Sigmoid colon (tissue), 7 donors: ENCODE measurements at regions of chr3 and their contacts with region 1.

Region 1: DNA sequence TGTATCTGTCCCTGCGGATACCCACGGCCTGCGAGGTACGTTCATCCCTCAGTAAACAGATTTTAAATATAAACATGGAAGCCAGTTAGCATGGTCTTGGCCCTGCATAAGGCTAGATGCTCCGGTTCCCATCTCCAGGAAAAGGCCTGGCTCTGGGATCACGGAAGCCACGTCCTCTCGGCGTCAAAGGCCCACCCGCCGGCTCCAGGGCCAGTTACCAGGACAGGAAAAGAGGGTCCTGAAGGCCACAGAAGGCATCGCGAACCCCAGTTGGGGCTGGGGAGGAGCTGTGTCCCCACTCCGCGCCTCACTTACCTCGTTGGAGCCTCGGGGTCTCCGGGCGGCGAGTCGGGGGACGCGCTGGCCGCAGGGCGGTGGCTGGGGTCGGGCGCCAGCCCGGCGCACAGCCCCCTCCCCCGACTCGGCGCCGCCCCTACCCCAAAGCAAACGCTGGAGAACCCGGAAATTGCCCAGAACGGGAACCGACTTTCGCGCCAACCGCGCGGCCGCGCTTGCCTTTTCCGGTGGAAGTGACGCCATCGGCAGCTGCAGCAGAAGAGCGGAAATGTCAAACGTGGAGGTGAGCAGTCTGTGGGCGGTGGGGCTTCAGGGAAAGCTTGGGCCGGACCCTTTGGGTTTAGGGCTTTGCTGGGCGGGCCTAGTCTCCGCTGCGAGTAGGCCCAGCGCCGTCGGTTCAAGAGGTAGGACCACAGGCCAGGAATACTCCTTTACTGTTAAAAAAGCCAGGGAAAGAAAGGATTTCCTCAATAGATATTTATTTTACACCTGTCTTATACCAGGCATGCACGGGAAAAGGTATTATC is at the start of gene TOPBP1:
- DNase-seq: peak; percentile 86
- H3K4me3 ChIP-seq: peak within 1 kb of the TSS; percentile 63 to 93 (median 85)
- H3K27ac ChIP-seq: peak within 1 kb of the TSS; percentile 82 to 86 (median 82)
- H3K4me1 ChIP-seq: peaks cover 0 to 28% (median 12%) of the 10 kb centered on the region in 4 donors
- H3K27me3 ChIP-seq: no peaks in the 10 kb centered on the region
- CTCF ChIP-seq: no peak
- EP300 ChIP-seq: no peak
- POLR2A ChIP-seq: no peak
- total RNA-seq, gene TOPBP1: 14.1 to 30.2 (median 16.8) TPM

Region 2: DNA sequence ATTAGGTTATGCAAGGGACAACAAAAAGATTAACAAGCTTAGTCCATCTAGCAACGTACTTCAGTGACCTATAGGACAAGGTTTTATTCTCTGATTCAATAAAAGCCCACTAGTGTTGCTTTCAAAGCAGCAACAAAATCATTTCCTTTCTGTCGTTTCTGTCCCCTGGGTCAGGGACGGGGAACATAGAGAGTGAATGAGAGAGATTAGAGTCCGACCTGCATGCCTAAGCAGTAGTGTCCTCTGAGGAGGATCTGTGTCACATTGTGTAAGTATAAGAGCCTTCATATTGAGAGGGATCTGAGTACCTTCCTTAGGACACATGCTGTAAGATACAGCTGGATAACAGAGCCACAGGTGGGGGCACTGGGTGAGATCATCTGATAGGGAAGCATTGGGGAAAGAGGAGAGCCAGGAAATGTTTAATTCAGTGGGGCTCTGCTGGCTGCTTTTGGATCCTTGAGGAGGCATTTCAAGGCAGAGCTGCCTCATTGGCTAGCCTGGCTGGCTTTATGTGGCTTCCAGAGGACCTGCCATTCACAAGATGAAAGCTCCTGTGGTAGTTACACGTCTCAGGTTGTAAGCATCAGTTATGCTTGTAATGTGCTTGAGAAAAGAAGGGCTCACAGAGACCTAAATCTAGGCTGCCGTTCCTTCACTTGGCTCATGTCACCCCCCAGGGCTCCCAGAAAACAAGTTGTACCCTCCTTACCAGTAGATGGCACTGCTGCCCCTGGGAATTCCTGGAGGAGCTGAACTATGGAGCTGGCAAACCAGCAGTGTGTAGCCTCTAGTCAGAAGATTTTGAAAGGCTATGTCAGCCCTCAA is 620.8 kb before region 1 on chr3:
- intact Hi-C with region 1: loop called (anchors 10 kb)
- DNase-seq: peak; percentile 75
- H3K4me3 ChIP-seq: no peak overlapping the region
- H3K27ac ChIP-seq: peak overlapping the region in 1 of 4 donors; percentile 66
- H3K4me1 ChIP-seq: peaks cover 0 to 22% (median 20%) of the 10 kb centered on the region in 4 donors
- H3K27me3 ChIP-seq: peaks cover 0 to 29% (median 12%) of the 10 kb centered on the region in 3 donors
- CTCF ChIP-seq: peak; percentile 32 to 60 (median 48)
- EP300 ChIP-seq: no peak
- POLR2A ChIP-seq: no peak

Region 3: DNA sequence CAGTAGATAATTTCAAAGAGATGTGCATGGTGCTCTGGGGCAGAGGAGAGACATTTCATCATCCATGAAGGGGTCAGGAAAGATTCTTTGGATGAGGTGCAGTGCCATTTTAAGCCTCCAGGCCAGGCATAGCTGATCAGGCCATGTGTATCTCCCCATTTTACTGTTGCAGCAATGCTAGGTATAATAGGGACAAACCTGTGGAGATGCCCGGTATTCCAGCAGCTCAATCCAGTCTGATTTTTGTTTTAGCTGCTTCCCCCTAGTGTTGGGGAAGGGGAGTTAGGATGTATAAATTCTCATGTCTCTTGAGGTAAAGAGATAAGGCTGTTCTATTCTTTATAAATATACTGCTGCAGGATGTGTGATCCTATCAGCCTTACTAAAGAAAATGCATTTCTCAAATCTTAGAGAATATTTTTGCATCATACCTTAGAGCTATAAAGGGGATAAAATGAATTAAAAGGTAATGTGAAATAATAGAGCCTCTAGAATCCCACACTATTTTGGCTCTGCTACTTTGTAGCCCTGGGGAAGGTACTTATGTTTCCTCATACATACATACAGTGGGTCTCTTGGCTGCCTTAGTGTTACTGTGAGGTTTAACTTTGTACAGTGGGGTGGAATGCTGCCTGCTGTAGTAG is 83.0 kb before region 1 on chr3:
- intact Hi-C with region 1: loop called (anchors 5 kb)
- DNase-seq: no peak
- H3K4me3 ChIP-seq: no peak overlapping the region
- H3K27ac ChIP-seq: no peak overlapping the region
- H3K4me1 ChIP-seq: peaks cover 0 to 69% (median 52%) of the 10 kb centered on the region in 4 donors
- H3K27me3 ChIP-seq: no peaks in the 10 kb centered on the region
- CTCF ChIP-seq: peak in 3 of 4 experiments; percentile 35 to 42 (median 38)
- EP300 ChIP-seq: no peak
- POLR2A ChIP-seq: no peak

Region 4: DNA sequence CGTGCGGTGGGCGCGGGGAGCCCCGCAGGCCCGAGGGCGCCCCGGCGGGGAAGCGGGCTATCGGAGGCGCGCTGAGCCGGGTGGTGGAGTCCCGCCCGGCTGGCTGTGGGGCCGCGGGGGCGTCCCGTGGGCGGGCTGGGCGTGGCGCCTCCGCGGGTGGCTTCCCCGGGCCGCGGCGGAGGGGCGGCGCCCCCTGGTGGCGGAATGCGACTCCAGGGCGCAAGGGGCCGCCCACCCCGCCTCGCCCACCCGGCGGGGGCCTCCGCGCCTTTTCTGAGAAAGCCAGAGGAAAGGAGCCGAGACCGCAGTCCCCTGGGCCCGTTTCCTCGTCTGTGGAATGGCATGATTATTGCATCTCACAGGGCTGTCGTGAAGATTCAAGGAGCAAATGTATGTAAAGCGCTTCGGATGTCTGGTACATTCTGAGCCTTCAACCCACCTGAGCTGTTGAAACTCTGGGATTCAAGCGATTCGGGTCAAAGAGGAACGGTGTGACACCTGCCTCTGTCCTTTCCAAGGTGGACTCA is 265.9 kb after region 1 on chr3:
- intact Hi-C with region 1: loop called (anchors 5 kb)
- DNase-seq: no peak
- H3K4me3 ChIP-seq: peak overlapping the region; percentile 29 to 60 (median 54)
- H3K27ac ChIP-seq: peak overlapping the region in 1 of 4 donors; percentile 26
- H3K4me1 ChIP-seq: peaks cover 0 to 14% (median 12%) of the 10 kb centered on the region in 4 donors
- H3K27me3 ChIP-seq: no peaks in the 10 kb centered on the region
- CTCF ChIP-seq: peak; percentile 32 to 84 (median 42)
- EP300 ChIP-seq: no peak
- POLR2A ChIP-seq: no peak